Breast epithelium (tissue), 4 donors: ENCODE measurements at regions of chr5 and their contacts with region 1.

Region 1: DNA sequence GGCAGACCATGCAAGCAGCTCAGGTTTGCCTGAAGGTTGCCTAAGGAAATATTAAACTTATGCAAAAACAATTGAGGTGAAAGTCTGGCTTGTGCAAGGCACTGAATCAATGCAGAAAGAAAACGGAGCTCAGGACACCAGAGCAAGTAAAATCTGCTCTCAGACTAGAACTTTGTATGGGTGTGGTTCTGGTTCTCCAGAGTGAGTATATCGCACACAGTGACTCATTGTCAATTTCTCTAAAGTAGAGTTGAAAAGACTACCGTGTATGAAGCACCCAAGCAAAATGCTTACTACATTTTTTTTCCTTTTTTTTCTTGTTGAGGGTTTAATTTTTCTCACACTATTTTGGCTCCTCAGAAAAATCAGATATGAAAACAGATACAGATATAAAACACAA is 650.3 kb upstream of the CDH10 start:
- DNase-seq: no peak
- H3K4me3 ChIP-seq: no peak overlapping the region
- H3K27ac ChIP-seq: no peak overlapping the region
- H3K4me1 ChIP-seq: no peaks in the 10 kb centered on the region
- H3K27me3 ChIP-seq: no peaks in the 10 kb centered on the region
- CTCF ChIP-seq: no peak
- POLR2A ChIP-seq: no peak

Region 2: DNA sequence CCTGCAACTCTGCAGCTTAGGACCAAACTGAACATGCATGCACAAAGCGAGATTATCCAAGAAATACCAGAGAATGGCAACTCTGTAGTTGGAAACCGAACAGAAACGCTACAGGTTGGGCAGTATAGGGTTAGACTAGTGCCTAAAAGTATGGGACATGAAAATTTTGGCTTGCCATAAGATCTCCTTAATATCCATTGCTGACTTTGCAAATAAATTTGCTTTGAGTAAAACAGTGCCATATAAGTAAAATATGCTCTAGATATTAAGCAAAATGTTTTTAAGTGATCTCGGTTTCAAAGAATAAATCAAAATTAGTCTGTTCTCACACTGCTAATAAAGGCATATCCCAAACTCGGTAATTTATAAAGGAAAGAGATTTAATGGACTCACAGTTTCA is 1331.6 kb before region 1 on chr5:
- intact Hi-C with region 1: no loop called
- DNase-seq: no peak
- H3K4me3 ChIP-seq: no peak overlapping the region
- H3K27ac ChIP-seq: no peak overlapping the region
- H3K4me1 ChIP-seq: no peaks in the 10 kb centered on the region
- H3K27me3 ChIP-seq: no peaks in the 10 kb centered on the region
- CTCF ChIP-seq: no peak
- POLR2A ChIP-seq: no peak

Region 3: GRCh38 chr5:26078041-26078440 is 783.0 kb after region 1 on chr5:
- intact Hi-C with region 1: no loop called
- DNase-seq: no peak
- H3K4me3 ChIP-seq: no peak overlapping the region
- H3K27ac ChIP-seq: no peak overlapping the region
- H3K4me1 ChIP-seq: no peaks in the 10 kb centered on the region
- H3K27me3 ChIP-seq: no peaks in the 10 kb centered on the region
- CTCF ChIP-seq: no peak
- POLR2A ChIP-seq: no peak

Region 4: DNA sequence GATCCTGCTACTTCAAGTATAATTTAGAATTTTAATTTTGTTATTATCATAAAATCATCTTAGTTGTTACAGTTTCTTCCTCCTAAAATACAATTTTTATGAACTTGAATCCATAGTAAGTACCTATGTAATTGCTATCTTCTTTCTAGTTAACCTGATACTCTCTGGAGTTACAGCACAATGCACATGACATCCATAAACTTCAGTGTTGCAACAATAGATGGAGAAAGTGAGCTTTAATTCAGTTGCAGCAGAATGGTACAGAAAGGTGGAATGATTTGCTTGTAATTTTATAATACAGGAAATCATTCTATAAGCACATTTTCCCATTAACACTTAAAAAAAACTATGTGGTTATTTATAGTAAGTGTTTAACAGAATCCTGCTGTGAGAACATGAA is 1371.3 kb after region 1 on chr5:
- intact Hi-C with region 1: loop called (anchors 10 kb)
- DNase-seq: no peak
- H3K4me3 ChIP-seq: no peak overlapping the region
- H3K27ac ChIP-seq: no peak overlapping the region
- H3K4me1 ChIP-seq: no peaks in the 10 kb centered on the region
- H3K27me3 ChIP-seq: no peaks in the 10 kb centered on the region
- CTCF ChIP-seq: no peak
- POLR2A ChIP-seq: no peak

Region 5: GRCh38 chr5:26986985-26987384 is 1691.9 kb after region 1 on chr5:
- intact Hi-C with region 1: no loop called
- DNase-seq: no peak
- H3K4me3 ChIP-seq: no peak overlapping the region
- H3K27ac ChIP-seq: no peak overlapping the region
- H3K4me1 ChIP-seq: no peaks in the 10 kb centered on the region
- H3K27me3 ChIP-seq: no peaks in the 10 kb centered on the region
- CTCF ChIP-seq: no peak
- POLR2A ChIP-seq: no peak